Activated T-helper 2 cell treated with anti-CD3 and anti-CD28 coated beads, Interferon-gamma antibody, Interleukin-2, Interleukin-4, amounts not matched to agents 10 μg/mL and 5 μg/mL and 100 μg/mL, durations not matched to agents 14 hours and 24 hours and 36 hours (primary cell): ENCODE measurements at regions of chr12 and their contacts with region 1.

Region 1: DNA sequence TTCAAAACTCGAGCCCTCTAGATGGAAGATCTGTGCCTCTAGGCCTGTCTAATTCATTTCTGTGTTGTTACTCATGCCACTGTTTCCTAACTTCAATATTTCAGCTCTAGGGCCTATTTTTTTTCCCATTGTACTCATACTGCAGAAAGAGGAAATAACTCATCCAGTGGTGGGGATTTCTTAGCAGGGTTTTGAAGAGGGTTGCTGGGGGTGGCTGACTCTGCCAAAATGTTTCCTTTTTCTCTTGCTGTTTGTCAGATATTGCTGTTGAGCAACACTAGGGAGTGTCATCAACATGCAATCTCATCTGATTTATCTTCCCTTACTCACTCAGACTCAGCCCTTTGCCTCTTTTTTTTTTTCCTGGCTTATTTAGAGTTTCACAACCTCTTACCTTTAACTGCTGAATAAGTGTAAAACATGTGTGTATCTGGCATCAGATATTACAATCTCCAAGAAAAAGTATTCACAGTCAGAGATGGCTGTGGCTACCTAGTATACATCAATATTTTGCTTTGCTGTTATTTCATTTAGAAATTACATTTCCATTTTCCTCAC is 189.5 kb downstream of the DUSP6 start:
- DNase-seq: peak; percentile 55
- H3K4me3 Mint-ChIP-seq: no peak overlapping the region
- H3K27ac Mint-ChIP-seq: no peak overlapping the region
- H3K4me1 Mint-ChIP-seq: peaks cover 27% of the 10 kb centered on the region
- H3K27me3 Mint-ChIP-seq: no peaks in the 10 kb centered on the region

Region 2: GRCh38 chr12:89019408-89020120 is 143.2 kb before region 1 on chr12:
- intact Hi-C with region 1: loop called (anchors 1 kb)
- DNase-seq: peak; percentile 75
- H3K4me3 Mint-ChIP-seq: no peak overlapping the region
- H3K27ac Mint-ChIP-seq: no peak overlapping the region
- H3K4me1 Mint-ChIP-seq: peaks cover 27% of the 10 kb centered on the region
- H3K27me3 Mint-ChIP-seq: peaks cover 1% of the 10 kb centered on the region

Region 3: DNA sequence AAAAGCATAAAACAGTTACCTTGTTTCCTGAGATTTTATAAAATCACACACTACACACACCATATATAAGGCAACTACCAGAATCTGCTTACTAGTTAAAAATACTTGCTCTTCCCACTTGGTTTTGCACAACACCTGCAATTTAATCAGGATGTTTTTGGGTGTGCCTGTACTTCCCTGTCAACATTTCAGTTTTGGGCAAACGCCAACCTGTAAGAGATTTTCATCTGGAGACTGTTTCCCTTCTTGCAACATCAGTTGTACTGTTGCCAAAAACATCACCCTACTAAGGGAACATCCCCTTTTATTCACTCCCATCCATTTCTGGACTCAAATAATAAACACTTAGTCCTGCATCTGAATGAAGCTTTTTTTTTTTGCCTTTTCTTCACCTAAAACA is 17.2 kb after region 1 on chr12:
- intact Hi-C with region 1: loop called (anchors 1 kb)
- DNase-seq: no peak
- H3K4me3 Mint-ChIP-seq: peak overlapping the region; percentile 50
- H3K27ac Mint-ChIP-seq: peak overlapping the region; percentile 86
- H3K4me1 Mint-ChIP-seq: peaks cover 71% of the 10 kb centered on the region
- H3K27me3 Mint-ChIP-seq: no peaks in the 10 kb centered on the region

Region 4: DNA sequence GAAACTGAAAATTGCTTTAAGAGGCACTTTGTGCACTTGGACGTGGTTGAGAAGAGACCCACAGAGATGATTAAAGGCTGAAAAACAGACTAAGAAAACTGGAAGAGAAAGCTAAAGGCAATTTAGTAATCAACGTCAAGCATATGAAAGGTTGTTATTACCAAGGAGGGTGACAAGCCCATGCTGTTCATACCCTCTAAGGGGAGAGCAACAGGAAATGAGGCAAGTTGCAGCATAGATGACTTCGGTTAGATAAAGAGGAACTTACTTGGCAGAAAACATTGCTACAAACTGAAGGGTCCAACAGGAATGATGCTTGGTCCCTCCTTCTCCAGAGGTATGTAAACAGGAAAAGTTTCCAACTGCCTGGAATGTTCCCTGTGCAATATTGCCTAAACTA is 81.8 kb after region 1 on chr12:
- intact Hi-C with region 1: loop called (anchors 1 kb)
- DNase-seq: peak; percentile 47
- H3K4me3 Mint-ChIP-seq: peak overlapping the region; percentile 35
- H3K27ac Mint-ChIP-seq: peak overlapping the region; percentile 85
- H3K4me1 Mint-ChIP-seq: peaks cover 67% of the 10 kb centered on the region
- H3K27me3 Mint-ChIP-seq: no peaks in the 10 kb centered on the region

Region 5: GRCh38 chr12:89389755-89390661 is 227.2 kb after region 1 on chr12:
- intact Hi-C with region 1: loop called (anchors 1 kb)
- DNase-seq: no peak
- H3K4me3 Mint-ChIP-seq: peak overlapping the region; percentile 2
- H3K27ac Mint-ChIP-seq: peak overlapping the region; percentile 87
- H3K4me1 Mint-ChIP-seq: peaks cover 33% of the 10 kb centered on the region
- H3K27me3 Mint-ChIP-seq: no peaks in the 10 kb centered on the region

Region 6: GRCh38 chr12:89470741-89471509 is 308.1 kb after region 1 on chr12:
- intact Hi-C with region 1: loop called (anchors 1 kb)
- DNase-seq: no peak
- H3K4me3 Mint-ChIP-seq: no peak overlapping the region
- H3K27ac Mint-ChIP-seq: peak overlapping the region; percentile 63
- H3K4me1 Mint-ChIP-seq: peaks cover 65% of the 10 kb centered on the region
- H3K27me3 Mint-ChIP-seq: no peaks in the 10 kb centered on the region